ENCODE measurements at regions of chr4 and their contacts with region 1.

Region 1: GRCh38 chr4:88284439-88285234 is at the start of gene PPM1K:
- DNase-seq: peak; percentile 99
- H3K4me3 ChIP-seq: peak within 1 kb of the TSS; percentile 71 to 88 (median 82)
- H3K27ac ChIP-seq: peak within 1 kb of the TSS; percentile 82
- H3K4me1 ChIP-seq: peaks cover 13% of the 10 kb centered on the region
- H3K27me3 ChIP-seq: no peaks in the 10 kb centered on the region
- CTCF ChIP-seq: peak in 1 of 2 donors; percentile 9
- POLR2A ChIP-seq: no peak
- total RNA-seq, gene PPM1K: 8.6 and 10.4 TPM in 2 replicates

Region 2: GRCh38 chr4:88007304-88008121 is 277.1 kb before region 1 on chr4 and contains the start of gene PKD2:
- CTCF ChIA-PET with region 1: no interaction called
- POLR2A ChIA-PET with region 1: no interaction called
- dilution Hi-C with region 1: no loop called
- intact Hi-C with region 1: loop called (anchors 1 kb)
- DNase-seq: peak; percentile 73
- H3K4me3 ChIP-seq: peak within 1 kb of the TSS; percentile 66 to 89 (median 88)
- H3K27ac ChIP-seq: peak within 1 kb of the TSS; percentile 68
- H3K4me1 ChIP-seq: peaks cover 23% of the 10 kb centered on the region
- H3K27me3 ChIP-seq: no peaks in the 10 kb centered on the region
- CTCF ChIP-seq: no peak
- POLR2A ChIP-seq: peak; percentile 82
- total RNA-seq, gene PKD2: 27.0 and 33.5 TPM in 2 replicates

Region 3: GRCh38 chr4:88225232-88226105 is 59.2 kb before region 1 on chr4:
- CTCF ChIA-PET with region 1: interaction called, 4 read pairs
- POLR2A ChIA-PET with region 1: no interaction called
- dilution Hi-C with region 1: no loop called
- intact Hi-C with region 1: loop called (anchors 1 kb)
- DNase-seq: peak; percentile 91
- H3K4me3 ChIP-seq: peak overlapping the region in 1 of 3 experiments; percentile 6
- H3K27ac ChIP-seq: peak overlapping the region; percentile 95
- H3K4me1 ChIP-seq: peaks cover 19% of the 10 kb centered on the region
- H3K27me3 ChIP-seq: no peaks in the 10 kb centered on the region
- CTCF ChIP-seq: no peak
- POLR2A ChIP-seq: no peak

Region 4: DNA sequence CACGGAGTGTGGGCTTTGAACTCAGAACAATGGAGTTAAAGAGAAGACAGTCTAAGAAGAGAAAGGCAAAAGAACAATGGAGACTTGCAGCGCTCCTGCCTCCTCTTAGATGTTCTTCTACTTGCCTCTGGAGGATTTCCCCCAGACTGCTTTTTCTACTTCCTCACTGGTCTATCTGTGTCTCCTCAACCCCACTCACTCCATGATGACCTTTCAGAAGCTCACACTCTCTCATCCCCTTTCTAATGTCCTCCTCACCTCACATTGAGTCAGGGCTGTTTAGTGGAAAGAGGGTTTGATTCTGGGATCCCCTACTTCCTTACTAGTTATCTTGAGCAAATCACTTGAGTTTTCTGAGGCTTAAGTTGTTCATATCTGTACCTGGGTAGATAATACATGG is 81.8 kb after region 1 on chr4:
- CTCF ChIA-PET with region 1: interaction called, 10 read pairs
- POLR2A ChIA-PET with region 1: no interaction called
- dilution Hi-C with region 1: no loop called
- intact Hi-C with region 1: no loop called
- DNase-seq: no peak
- H3K4me3 ChIP-seq: no peak overlapping the region
- H3K27ac ChIP-seq: no peak overlapping the region
- H3K4me1 ChIP-seq: no peaks in the 10 kb centered on the region
- H3K27me3 ChIP-seq: peaks cover 0 to 2% of the 10 kb centered on the region in 2 experiments
- CTCF ChIP-seq: no peak
- POLR2A ChIP-seq: no peak

Region 5: GRCh38 chr4:88514557-88515511 is 230.2 kb after region 1 on chr4:
- CTCF ChIA-PET with region 1: interaction called, 13 read pairs
- POLR2A ChIA-PET with region 1: no interaction called
- dilution Hi-C with region 1: no loop called
- intact Hi-C with region 1: loop called (anchors 1 kb)
- DNase-seq: no peak
- H3K4me3 ChIP-seq: no peak overlapping the region
- H3K27ac ChIP-seq: no peak overlapping the region
- H3K4me1 ChIP-seq: peaks cover 10% of the 10 kb centered on the region
- H3K27me3 ChIP-seq: no peaks in the 10 kb centered on the region
- CTCF ChIP-seq: no peak
- POLR2A ChIP-seq: no peak

Measured in endothelial cell of umbilical vein (primary cell).